HCT116 (cell line): ENCODE measurements at regions of chr5 and their contacts with region 1.

Region 1: DNA sequence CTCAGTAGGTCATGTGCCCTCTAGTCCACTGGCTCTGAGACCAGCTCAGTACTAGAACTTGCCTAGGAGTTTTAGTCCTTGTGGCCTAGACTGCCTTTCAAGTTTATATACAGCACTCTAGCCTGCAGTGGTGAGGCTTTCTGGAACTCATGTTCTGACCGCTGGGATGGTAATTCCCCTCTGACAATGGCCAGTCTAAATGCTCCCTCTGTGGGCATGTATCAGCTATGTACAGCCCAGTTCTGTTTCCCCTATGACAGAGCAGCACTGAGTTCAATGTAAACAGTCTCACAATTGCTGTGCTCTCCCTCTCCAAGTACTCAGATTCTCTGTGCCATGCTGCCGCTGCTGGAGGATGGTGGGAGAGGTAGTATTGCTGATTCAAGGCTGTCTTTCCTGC is 68.6 kb upstream of the SLC27A6 start:
- DNase-seq: no peak
- ATAC-seq: no peak
- H3K4me3 ChIP-seq: no peak overlapping the region
- H3K27ac ChIP-seq: no peak overlapping the region
- H3K4me1 ChIP-seq: no peaks in the 10 kb centered on the region
- H3K27me3 ChIP-seq: no peaks in the 10 kb centered on the region
- CTCF ChIP-seq: no peak
- POLR2A ChIP-seq: no peak
- RAD21 ChIP-seq: no peak

Region 2: DNA sequence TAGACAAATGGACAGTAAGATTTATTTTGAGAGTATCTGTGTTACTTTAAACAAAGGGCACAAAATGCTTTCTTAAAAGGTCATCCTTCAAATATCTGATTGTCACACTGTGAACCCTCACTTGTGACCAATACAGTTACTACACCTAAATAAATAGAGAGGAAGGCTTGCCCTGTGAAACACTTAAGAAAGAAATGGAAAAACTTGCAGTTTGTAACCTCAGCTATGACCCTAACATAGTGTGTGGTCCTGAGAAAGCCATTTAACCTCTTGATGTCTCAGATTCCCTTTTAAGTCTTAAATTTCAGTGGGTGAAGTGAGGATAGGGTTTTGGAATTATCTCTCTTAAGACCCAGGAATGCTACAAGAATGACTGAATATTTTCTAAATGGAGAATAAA is 58.1 kb before region 1 on chr5:
- CTCF ChIA-PET with region 1: no interaction called
- POLR2A ChIA-PET with region 1: no interaction called
- RAD21 ChIA-PET with region 1: no interaction called
- intact Hi-C with region 1: loop called (anchors 10 kb)
- DNase-seq: no peak
- ATAC-seq: no peak
- H3K4me3 ChIP-seq: no peak overlapping the region
- H3K27ac ChIP-seq: no peak overlapping the region
- H3K4me1 ChIP-seq: no peaks in the 10 kb centered on the region
- H3K27me3 ChIP-seq: no peaks in the 10 kb centered on the region
- CTCF ChIP-seq: no peak
- POLR2A ChIP-seq: no peak
- RAD21 ChIP-seq: no peak